PC-3 (cell line): ENCODE measurements at regions of chr18 and their contacts with region 1.

Region 1: GRCh38 chr18:47215554-47216138 is 35.8 kb downstream of the SKOR2 start:
- DNase-seq: peak; percentile 37
- ATAC-seq: peak; percentile 73
- H3K4me3 ChIP-seq: no peak overlapping the region
- H3K27ac ChIP-seq: no peak overlapping the region
- H3K4me1 ChIP-seq: no peaks in the 10 kb centered on the region
- H3K27me3 ChIP-seq: peaks cover 20% of the 10 kb centered on the region
- CTCF ChIP-seq: peak; percentile 54

Region 2: DNA sequence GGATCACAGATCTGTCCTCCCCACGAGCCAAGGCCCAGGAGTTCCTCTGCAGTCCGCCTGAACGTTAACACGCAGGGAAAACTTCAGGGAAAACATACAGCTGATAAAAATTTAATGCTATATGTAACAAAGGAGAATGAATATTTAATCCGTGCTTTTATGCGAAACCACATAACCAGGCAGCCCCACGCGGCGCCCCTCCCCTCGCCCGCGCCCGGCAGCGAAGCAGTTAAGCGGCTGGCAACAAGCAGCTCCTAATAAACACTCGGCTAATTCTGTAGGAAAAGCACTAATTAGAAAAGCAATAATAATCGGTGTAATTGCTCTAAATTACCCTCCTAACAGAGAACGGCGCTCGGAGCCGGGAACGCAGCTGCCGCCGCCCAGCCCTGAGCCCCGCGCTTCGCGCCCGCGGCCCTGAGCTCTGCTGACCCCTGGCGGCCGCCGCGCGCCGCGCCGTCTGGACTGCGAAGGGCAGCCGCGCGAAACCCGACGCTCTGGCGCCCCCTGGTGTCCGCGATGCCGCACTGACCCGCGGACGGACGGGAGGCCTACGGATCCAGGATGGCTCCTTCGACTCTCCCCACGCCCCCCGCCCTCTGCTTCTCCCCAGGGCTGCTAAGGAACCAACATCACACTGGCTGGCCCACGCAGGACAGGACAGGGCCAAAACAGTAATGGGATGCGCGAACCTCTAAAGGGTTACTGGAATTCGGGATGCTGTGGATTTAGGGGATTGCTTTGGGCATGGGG is 533.4 kb after region 1 on chr18:
- CTCF ChIA-PET with region 1: no interaction called
- POLR2A ChIA-PET with region 1: interaction called, 3 read pairs
- intact Hi-C with region 1: loop called (anchors 2 kb)
- DNase-seq: peak; percentile 59
- ATAC-seq: peak; percentile 96
- H3K4me3 ChIP-seq: no peak overlapping the region
- H3K27ac ChIP-seq: no peak overlapping the region
- H3K4me1 ChIP-seq: no peaks in the 10 kb centered on the region
- H3K27me3 ChIP-seq: no peaks in the 10 kb centered on the region
- CTCF ChIP-seq: peak; percentile 69